AG04449 (cell line): ENCODE measurements at regions of chr20 and their contacts with region 1.

Region 1: DNA sequence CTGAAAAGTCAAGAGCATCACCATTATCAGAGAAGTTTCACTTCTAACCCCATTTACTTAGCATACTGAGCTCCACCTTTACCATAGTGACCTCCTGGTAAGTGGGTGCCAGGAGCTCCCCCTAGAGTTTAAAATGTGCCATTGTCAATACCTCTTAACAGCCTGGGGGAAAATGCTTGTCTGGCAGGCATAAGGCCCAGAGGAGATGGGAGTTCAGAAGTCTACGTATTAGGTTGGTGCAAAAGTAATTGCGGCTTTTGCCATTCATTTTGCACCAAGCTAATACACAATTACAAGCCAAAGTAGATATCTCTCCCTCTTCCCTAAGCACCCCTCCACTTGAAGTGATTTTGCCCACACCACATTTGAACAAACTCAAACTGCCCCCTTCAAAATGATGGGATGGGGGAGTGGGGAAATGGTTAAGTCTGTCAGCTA is 919.0 kb downstream of the KIF16B start:
- DNase-seq: no peak
- H3K4me3 ChIP-seq: no peak overlapping the region
- CTCF ChIP-seq: peak; percentile 51

Region 2: GRCh38 chr20:15302075-15302474 is 352.2 kb before region 1 on chr20:
- CTCF ChIA-PET with region 1: no interaction called
- POLR2A ChIA-PET with region 1: no interaction called
- DNase-seq: no peak
- H3K4me3 ChIP-seq: no peak overlapping the region
- CTCF ChIP-seq: no peak

Region 3: DNA sequence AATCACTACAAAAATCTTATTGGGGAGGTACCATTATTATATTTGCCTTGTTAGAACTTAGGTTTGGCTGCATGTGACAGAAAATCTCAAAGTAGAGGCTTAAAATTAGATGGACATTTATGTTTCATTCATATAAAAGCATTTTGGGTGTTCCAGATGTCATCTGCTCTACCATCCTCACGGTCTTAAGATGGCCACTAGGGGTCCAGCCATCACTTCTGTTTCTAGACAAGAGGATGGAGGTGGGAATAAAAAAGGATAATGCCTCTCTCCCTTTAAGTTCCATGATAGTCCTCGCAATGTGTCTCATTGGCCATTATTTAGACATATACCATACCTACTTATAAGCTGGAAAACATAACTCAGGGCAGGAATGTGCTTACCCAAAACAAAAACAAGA is 10.5 kb before region 1 on chr20:
- CTCF ChIA-PET with region 1: interaction called, 60 read pairs
- POLR2A ChIA-PET with region 1: interaction called, 4 read pairs
- DNase-seq: no peak
- H3K4me3 ChIP-seq: no peak overlapping the region
- CTCF ChIP-seq: peak; percentile 29

Region 4: DNA sequence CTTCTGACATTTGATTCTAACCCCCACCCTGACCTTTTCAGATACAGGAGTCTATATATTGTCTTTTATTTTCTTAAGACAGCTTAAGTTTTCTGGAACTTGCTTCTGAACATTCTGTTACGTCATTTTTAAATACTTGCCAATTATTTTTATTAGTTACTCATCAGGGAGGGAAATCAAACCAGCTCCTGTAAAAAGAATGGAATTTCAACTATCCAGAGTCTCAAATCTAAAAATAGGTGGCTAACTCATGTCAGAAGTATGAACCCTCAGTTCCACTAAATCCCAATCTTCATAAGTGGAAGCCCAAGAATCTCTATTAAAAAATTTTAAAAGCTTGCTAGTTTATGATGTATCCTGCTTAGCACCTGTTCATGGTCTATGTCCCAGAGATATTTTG is 19.0 kb after region 1 on chr20:
- CTCF ChIA-PET with region 1: interaction called, 50 read pairs
- POLR2A ChIA-PET with region 1: interaction called, 5 read pairs
- DNase-seq: peak; percentile 70
- H3K4me3 ChIP-seq: no peak overlapping the region
- CTCF ChIP-seq: no peak